Caco-2 (cell line): ENCODE measurements at regions of chr9 and their contacts with region 1.

Region 1: GRCh38 chr9:35903049-35903448 is 3.0 kb upstream of the HRCT1 start:
- DNase-seq: peak; percentile 58 to 71
- H3K4me3 ChIP-seq: no peak overlapping the region
- H3K4me3 Mint-ChIP-seq: no peak overlapping the region
- H3K27ac Mint-ChIP-seq: peak overlapping the region; percentile 32
- H3K4me1 ChIP-seq: peaks cover 26% of the 10 kb centered on the region
- H3K4me1 Mint-ChIP-seq: peaks cover 11% of the 10 kb centered on the region
- H3K27me3 ChIP-seq: no peaks in the 10 kb centered on the region
- H3K27me3 Mint-ChIP-seq: peaks cover 6% of the 10 kb centered on the region
- CTCF ChIP-seq: peak; percentile 55 to 76

Region 2: DNA sequence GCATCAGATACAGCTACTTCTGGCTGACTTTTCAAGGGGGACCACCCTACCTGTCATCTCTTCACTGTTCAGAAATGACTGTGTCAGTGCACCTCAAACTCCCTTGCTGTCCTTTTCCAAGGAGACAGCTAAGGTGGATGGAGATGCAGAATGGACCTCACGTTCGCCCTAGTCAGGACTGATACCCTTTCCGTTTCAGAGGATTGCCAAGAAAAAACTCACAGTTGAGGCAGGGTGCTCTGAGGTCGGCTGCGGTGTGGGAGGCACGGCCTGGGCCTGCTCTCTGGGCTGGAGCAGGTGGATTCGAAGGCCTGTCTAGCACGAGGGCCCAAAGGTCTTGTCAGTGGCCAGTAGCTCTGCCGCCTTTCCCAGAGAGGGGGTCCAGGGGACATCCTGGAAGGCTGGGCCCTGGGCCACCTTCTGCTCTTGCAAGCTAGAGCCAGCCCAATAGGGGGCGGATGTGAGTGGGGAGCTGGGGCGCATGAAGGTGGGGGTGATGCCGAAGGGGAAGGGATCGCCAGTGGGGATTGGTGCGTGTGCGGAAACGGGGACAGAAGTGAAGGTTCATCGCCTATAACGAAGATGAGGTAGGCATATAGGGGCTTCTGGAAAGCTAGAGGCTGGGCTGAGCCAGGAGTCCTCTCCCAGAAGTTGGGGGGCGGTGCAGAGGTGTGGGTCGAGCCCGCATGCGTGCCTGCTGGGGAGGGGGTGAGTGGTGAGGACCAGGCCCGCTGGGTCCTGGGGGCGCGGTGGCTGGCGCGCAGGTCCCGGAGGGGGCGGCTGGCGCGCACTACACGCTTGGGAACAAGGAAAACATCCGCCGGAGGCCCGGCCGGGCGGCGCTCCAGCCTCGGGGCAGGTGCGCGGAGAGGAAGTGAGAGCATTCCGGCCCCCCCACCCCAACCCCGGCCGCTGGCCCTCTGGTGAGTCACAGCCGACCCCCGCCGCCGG is 146.5 kb before region 1 on chr9:
- CTCF ChIA-PET with region 1: no interaction called
- POLR2A ChIA-PET with region 1: no interaction called
- intact Hi-C with region 1: no loop called
- DNase-seq: peak; percentile 72 to 77
- H3K4me3 ChIP-seq: peak overlapping the region; percentile 59
- H3K4me3 Mint-ChIP-seq: peak overlapping the region; percentile 80
- H3K27ac Mint-ChIP-seq: peak overlapping the region; percentile 81
- H3K4me1 ChIP-seq: peaks cover 5% of the 10 kb centered on the region; the same call in 1 of the 2 replicates
- H3K4me1 Mint-ChIP-seq: peaks cover 14% of the 10 kb centered on the region
- H3K27me3 ChIP-seq: no peaks in the 10 kb centered on the region
- H3K27me3 Mint-ChIP-seq: no peaks in the 10 kb centered on the region
- CTCF ChIP-seq: peak; percentile 56 to 76

Region 3: GRCh38 chr9:35812025-35812602 is 90.9 kb before region 1 on chr9 and contains the start of gene SPAG8:
- CTCF ChIA-PET with region 1: no interaction called
- POLR2A ChIA-PET with region 1: no interaction called
- intact Hi-C with region 1: no loop called
- DNase-seq: peak; percentile 91 to 95
- H3K4me3 ChIP-seq: peak within 1 kb of the TSS; percentile 26
- H3K4me3 Mint-ChIP-seq: peak within 1 kb of the TSS; percentile 93
- H3K27ac Mint-ChIP-seq: peak within 1 kb of the TSS; percentile 78
- H3K4me1 ChIP-seq: peaks cover 20% of the 10 kb centered on the region
- H3K4me1 Mint-ChIP-seq: peaks cover 14% of the 10 kb centered on the region
- H3K27me3 ChIP-seq: no peaks in the 10 kb centered on the region
- H3K27me3 Mint-ChIP-seq: no peaks in the 10 kb centered on the region
- CTCF ChIP-seq: no peak
- total RNA-seq, gene SPAG8: 0.19 and 0.29 TPM in 2 replicates

Region 4: GRCh38 chr9:35945341-35946018 is 42.4 kb after region 1 on chr9:
- CTCF ChIA-PET with region 1: interaction called, 39 read pairs
- POLR2A ChIA-PET with region 1: interaction called, 7 read pairs
- intact Hi-C with region 1: loop called (anchors 2 kb)
- DNase-seq: peak; percentile 79 to 81
- H3K4me3 ChIP-seq: no peak overlapping the region
- H3K4me3 Mint-ChIP-seq: peak overlapping the region; percentile 57
- H3K27ac Mint-ChIP-seq: peak overlapping the region; percentile 58
- H3K4me1 ChIP-seq: peaks cover 12% of the 10 kb centered on the region; the same call in 1 of the 2 replicates
- H3K4me1 Mint-ChIP-seq: peaks cover 10% of the 10 kb centered on the region
- H3K27me3 ChIP-seq: no peaks in the 10 kb centered on the region
- H3K27me3 Mint-ChIP-seq: no peaks in the 10 kb centered on the region
- CTCF ChIP-seq: peak; percentile 77 to 79

Region 5: GRCh38 chr9:36023260-36024048 is 120.4 kb after region 1 on chr9:
- CTCF ChIA-PET with region 1: interaction called, 16 read pairs
- POLR2A ChIA-PET with region 1: no interaction called
- intact Hi-C with region 1: loop called (anchors 5 kb)
- DNase-seq: peak; percentile 75 to 76
- H3K4me3 ChIP-seq: no peak overlapping the region
- H3K4me3 Mint-ChIP-seq: no peak overlapping the region
- H3K27ac Mint-ChIP-seq: no peak overlapping the region
- H3K4me1 ChIP-seq: no peaks in the 10 kb centered on the region
- H3K4me1 Mint-ChIP-seq: no peaks in the 10 kb centered on the region
- H3K27me3 ChIP-seq: no peaks in the 10 kb centered on the region
- H3K27me3 Mint-ChIP-seq: peaks cover 7% of the 10 kb centered on the region
- CTCF ChIP-seq: peak; percentile 76 to 92

Region 6: DNA sequence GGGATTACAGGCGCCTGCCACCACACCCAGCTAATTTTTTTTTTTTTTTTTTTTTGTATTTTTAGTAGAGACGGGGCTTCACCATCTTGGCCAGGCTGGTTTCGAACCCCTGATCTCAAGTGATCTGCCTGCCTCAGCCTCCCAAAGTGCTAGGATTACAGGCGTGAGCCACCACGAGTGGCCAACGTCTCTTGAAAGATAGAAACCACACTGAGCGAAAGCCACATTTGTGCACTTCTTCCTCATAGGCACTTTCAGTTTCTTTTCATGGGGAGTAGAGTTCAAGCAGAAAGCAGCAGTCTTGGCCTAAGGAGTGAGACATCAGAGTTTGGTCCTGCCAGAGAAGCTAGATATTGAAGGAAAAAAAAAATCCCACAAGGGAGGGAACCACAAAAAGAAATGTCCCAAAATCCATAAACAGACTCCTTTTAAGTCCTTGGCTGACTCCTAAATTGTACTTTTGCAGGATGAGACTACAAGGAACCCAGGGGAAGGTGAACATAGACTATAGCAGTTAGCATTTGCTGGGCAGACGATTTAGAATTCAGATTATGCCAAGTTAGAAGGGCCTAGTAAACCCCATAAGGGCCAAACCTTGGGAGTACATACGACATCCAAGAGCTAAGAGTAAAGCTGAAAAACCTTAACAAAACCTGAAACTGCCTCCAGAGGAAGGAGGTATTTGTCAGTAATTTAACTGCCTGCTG is 189.6 kb after region 1 on chr9:
- CTCF ChIA-PET with region 1: no interaction called
- POLR2A ChIA-PET with region 1: no interaction called
- intact Hi-C with region 1: no loop called
- DNase-seq: no peak
- H3K4me3 ChIP-seq: no peak overlapping the region
- H3K4me3 Mint-ChIP-seq: no peak overlapping the region
- H3K27ac Mint-ChIP-seq: no peak overlapping the region
- H3K4me1 ChIP-seq: peaks cover 15% of the 10 kb centered on the region
- H3K4me1 Mint-ChIP-seq: peaks cover 15% of the 10 kb centered on the region
- H3K27me3 ChIP-seq: no peaks in the 10 kb centered on the region
- H3K27me3 Mint-ChIP-seq: no peaks in the 10 kb centered on the region
- CTCF ChIP-seq: no peak